Right ventricle myocardium inferior (tissue), 1 donor: ENCODE measurements at regions of chr6 and their contacts with region 1.

Region 1: DNA sequence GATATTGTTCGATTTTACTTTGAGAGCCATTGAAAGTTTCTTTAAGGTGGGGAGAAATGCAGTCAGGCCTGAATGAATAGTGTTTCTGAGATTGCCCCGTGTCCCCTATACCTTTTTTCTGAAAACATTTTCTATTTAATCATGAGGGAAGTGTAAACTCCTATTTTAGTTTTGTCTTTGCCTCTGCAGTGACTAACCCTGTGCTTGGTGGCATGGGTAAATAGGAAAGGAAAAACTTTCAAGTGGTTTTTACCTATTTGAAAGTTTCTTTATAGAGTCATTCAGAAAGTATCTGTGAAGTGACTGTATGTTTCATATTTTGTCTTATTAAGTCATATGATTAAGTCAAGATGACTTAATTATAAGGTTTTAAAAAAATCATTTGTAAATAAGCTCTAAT is 14.5 kb downstream of the SNRNP48 start:
- DNase-seq: no peak
- ATAC-seq: no peak

Region 2: DNA sequence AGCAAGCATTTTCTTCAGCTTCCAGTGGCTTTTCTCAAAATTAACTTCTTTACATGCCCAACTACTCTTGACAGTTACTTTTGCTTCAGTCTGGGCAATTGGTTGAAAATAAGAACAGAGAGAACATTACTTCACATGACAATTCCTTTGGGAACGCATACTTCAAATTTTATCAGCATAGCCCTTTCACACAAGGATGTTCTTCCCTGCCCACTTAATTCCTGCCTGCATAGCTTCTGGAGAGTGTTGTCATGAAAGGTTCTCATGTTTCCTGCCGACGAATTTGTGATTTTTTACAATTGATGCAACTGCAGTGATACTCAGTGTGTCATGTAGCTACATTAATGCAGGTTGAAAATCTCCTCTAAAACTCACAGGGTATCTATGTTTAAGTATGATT is 36.5 kb before region 1 on chr6:
- intact Hi-C with region 1: loop called (anchors 5 kb)
- DNase-seq: no peak
- ATAC-seq: no peak

Region 3: GRCh38 chr6:7697820-7698623 is 93.5 kb after region 1 on chr6:
- intact Hi-C with region 1: no loop called
- DNase-seq: no peak
- ATAC-seq: peak; percentile 60